ENCODE measurements at regions of chr4 and their contacts with region 1.

Region 1: GRCh38 chr4:55636656-55636999 is 530 bp upstream of the NMU start:
- H3K4me3 ChIP-seq: peak overlapping the region; percentile 62
- H3K27ac ChIP-seq: no peak overlapping the region
- H3K4me1 ChIP-seq: no peaks in the 10 kb centered on the region
- CTCF ChIP-seq: no peak

Region 2: DNA sequence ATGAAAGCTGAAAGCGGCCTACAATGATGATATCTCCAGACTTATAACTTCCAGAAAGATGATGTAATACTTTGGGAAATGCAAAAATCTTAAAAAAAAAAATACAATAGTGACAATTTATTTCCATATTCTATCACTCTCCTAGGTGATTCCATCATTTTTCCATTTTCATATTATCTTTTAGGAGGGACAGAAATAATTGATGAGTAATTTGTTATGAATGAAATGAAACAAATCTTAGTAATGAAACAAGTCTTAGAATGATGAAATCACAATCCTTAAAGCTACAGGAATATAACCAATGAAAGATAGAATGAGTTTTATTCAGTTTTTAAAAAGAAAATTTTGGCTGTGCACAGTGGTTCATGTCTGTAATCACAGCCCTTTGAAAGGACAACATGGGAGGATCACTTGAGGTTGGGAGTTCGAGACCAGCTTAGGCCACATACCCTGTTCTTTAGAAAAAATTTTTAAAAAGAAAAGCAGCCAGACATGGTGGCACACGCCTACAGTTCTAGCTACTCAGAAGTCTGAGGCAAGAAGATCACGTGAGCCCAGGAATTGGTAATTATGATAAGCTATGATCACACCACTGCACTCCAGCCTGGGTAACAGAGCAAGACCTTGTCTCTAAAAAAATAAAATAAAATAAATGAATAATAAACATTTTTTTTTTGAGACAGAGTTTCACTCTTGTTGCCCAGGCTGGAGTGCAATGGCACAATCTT is 111.6 kb before region 1 on chr4:
- CTCF ChIA-PET with region 1: interaction called, 10 read pairs
- POLR2A ChIA-PET with region 1: no interaction called
- H3K4me3 ChIP-seq: no peak overlapping the region
- H3K27ac ChIP-seq: no peak overlapping the region
- H3K4me1 ChIP-seq: no peaks in the 10 kb centered on the region
- CTCF ChIP-seq: no peak

Region 3: GRCh38 chr4:55617587-55618197 is 18.9 kb before region 1 on chr4:
- CTCF ChIA-PET with region 1: no interaction called
- POLR2A ChIA-PET with region 1: no interaction called
- H3K4me3 ChIP-seq: no peak overlapping the region
- H3K27ac ChIP-seq: no peak overlapping the region
- H3K4me1 ChIP-seq: no peaks in the 10 kb centered on the region
- CTCF ChIP-seq: no peak

Measured in HEK293 (cell line).